Activated CD4-positive, alpha-beta T cell treated with anti-CD3 and anti-CD28 coated beads, Interleukin-2, amount 10 ng/mL, durations not matched to agents 24 days and 14 days (primary cell): ENCODE measurements at regions of chr16 and their contacts with region 1.

Region 1: DNA sequence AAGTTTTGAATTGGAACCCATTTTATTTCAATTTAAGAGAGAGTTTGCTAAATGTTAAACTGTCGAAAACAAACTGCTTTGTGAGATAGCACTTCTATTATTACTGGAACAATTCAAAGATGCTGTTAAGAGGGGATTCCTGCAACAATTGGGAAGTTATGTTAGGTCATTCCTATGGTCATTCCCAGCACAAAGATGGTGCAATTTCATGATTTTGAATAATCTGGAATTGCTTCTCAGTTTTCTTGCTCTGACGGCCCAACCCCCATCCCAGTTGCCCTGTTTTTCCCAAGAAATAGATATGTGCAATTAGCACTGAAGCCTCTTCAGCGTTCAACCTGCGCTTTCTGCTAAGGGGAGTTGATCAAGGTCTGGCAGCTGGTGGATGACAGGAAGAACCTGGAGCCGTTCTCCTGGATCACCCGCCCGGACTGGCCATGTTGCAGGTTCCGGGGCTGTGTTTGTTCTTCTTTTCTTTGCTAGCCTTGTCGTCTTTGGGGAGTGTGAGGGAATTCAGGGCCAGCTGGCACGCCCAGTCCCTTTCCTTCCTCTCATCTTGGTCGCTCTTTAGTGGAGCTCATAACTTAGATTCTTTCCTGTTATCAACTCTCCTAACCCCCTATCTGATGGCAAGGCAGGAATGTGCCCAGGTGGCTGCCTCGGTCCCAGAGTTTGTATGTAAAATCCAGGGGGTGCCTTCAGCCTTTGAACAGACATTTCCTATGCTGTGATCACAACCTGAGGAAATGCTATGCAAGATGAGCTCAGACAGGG is 29.0 kb upstream of the IRF8 start:
- DNase-seq: no peak
- H3K4me3 Mint-ChIP-seq: peak overlapping the region; percentile 3
- H3K27ac Mint-ChIP-seq: peak overlapping the region; percentile 50
- H3K4me1 Mint-ChIP-seq: peaks cover 22% of the 10 kb centered on the region
- H3K27me3 Mint-ChIP-seq: peaks cover 13% of the 10 kb centered on the region

Region 2: DNA sequence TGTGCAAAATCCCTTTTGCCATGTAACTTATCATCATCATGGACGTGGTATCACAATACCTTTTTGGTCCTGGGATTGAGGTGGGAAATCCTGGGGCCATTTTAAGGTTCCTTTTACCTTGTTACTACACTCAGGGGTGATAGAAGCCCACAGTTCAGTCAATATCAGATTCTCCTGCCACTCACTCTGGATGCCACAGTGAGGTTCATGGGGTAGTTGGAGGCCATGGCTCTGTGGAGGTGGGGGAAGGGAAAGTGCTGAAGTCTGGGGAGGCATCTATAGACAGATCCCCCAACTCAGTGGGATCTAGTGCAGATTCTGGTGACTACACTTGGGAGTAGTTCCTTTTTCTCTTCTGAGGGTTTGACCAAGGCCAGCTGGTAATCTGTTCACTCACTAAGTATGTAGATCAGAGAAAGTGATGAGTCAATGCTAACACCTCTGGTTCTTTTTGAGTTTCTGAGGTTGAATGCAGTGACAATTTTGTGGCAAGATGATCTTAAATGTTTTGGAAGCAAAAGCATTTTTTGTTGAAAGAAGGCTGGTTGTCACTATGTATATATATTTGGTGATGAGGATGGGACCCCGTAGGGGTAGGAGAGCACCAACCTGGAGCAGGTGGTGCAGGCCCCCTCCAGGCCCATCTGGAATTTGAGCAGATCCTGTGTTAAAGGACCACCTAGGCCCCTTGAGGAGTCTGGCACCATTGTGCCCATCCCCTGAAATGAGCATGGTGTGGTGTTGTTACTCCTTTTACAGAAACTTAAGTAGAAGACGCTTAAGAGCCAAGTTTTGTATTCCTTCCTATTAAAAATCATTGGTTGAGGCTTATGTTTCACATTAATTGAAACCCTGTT is 10.2 kb after region 1 on chr16:
- intact Hi-C with region 1: loop called (anchors 1 kb)
- DNase-seq: no peak
- H3K4me3 Mint-ChIP-seq: peak overlapping the region; percentile 4
- H3K27ac Mint-ChIP-seq: peak overlapping the region; percentile 63
- H3K4me1 Mint-ChIP-seq: peaks cover 33% of the 10 kb centered on the region
- H3K27me3 Mint-ChIP-seq: peaks cover 61% of the 10 kb centered on the region

Region 3: GRCh38 chr16:85888405-85889331 is 18.7 kb after region 1 on chr16:
- intact Hi-C with region 1: loop called (anchors 1 kb)
- DNase-seq: peak; percentile 70
- H3K4me3 Mint-ChIP-seq: peak overlapping the region; percentile 52
- H3K27ac Mint-ChIP-seq: peak overlapping the region; percentile 82
- H3K4me1 Mint-ChIP-seq: peaks cover 38% of the 10 kb centered on the region
- H3K27me3 Mint-ChIP-seq: peaks cover 32% of the 10 kb centered on the region

Region 4: DNA sequence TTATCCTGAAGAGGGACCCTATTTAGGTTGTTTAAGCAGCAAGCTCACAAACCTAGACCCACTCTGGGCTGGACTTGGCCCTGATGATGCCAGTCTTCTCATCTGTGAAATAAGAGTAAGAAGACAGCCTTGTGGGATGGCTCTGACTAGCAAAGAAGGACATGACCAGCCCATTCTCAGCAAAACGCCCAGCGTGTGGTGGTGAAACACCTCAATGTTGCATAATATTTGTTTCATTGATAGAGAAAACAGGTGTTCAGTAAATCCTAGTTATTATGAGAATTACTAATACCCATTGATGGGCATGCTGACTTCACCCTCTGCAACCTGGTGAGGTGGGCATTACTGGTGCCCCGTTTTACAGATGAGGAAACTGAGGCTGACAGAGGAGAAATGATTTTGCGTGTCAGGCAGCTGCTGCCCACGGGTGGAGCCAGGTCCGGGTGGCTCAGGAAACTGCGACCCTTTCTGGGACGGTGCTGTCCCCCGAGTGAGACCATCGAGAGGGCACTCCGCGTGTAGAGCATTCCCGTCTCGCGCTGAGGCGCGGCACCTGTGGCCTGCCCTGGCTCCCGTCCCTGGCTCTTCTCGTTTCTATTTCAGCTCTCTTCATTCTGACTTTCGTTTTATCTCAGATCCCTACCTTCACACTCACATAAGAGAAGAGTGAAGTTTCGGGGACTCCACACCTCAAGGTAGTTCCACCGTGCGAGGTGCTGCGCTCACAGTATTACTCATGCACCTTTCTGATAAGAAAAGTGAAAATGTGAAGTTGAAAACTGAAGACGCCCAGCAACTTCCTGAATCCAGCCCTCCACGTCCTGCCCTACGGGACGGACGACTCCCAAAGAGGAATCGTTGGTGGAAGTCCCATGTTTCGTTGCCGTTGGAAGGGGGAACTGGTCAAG is 77.5 kb after region 1 on chr16:
- intact Hi-C with region 1: no loop called
- DNase-seq: peak; percentile 76
- H3K4me3 Mint-ChIP-seq: peak overlapping the region; percentile 73
- H3K27ac Mint-ChIP-seq: peak overlapping the region; percentile 62
- H3K4me1 Mint-ChIP-seq: peaks cover 56% of the 10 kb centered on the region
- H3K27me3 Mint-ChIP-seq: peaks cover 3% of the 10 kb centered on the region

Region 5: GRCh38 chr16:85988723-85989313 is 118.8 kb after region 1 on chr16:
- intact Hi-C with region 1: no loop called
- DNase-seq: peak; percentile 74
- H3K4me3 Mint-ChIP-seq: peak overlapping the region; percentile 81
- H3K27ac Mint-ChIP-seq: peak overlapping the region; percentile 99
- H3K4me1 Mint-ChIP-seq: peaks cover 66% of the 10 kb centered on the region
- H3K27me3 Mint-ChIP-seq: no peaks in the 10 kb centered on the region